GM12878 (cell line): ENCODE measurements at regions of chr17 and their contacts with region 1.

Region 1: DNA sequence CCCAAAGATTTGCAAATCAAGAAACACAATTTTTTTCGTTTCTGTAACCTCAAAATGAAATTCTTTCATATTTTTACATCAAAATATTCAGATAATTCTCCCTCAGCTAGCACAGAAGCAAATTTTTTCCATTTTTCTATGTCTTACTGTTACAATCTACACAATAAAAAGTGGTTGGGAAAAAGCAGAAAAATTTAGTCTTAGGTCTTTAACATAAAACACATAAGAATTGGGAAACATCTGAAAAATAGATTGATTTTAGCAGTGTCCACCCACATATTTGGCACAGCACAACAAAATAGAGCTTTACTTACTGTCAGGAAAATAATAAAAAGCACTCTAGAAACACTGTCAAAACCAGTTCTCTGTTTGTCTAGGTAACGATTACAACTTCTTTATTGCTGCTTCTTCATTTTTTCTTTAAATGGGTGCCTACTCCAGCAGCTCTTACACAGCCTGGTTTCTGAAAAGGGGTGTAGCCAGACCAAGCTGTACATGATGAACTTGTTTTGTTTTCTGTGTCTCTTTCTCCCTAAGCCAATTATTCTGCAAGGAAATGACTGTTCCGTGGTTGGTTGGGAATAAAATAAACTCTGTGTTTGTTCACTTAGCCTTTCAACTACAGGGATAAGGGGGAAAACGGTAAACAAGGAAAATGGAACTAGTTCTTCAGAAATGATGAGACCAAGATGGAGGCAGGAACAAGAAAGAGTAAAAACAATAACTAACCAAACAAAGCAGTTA is at the start of gene ABCA6:
- DNase-seq: no peak
- ATAC-seq: no peak
- H3K4me3 ChIP-seq: no peak within 1 kb of the TSS
- H3K27ac ChIP-seq: no peak within 1 kb of the TSS
- H3K4me1 ChIP-seq: no peaks in the 10 kb centered on the region
- H3K27me3 ChIP-seq: no peaks in the 10 kb centered on the region
- CTCF ChIP-seq: no peak
- EP300 ChIP-seq: no peak
- POLR2A ChIP-seq: no peak
- RAD21 ChIP-seq: no peak
- polyA plus RNA-seq, gene ABCA6: 9.0 to 10.1 TPM

Region 2: DNA sequence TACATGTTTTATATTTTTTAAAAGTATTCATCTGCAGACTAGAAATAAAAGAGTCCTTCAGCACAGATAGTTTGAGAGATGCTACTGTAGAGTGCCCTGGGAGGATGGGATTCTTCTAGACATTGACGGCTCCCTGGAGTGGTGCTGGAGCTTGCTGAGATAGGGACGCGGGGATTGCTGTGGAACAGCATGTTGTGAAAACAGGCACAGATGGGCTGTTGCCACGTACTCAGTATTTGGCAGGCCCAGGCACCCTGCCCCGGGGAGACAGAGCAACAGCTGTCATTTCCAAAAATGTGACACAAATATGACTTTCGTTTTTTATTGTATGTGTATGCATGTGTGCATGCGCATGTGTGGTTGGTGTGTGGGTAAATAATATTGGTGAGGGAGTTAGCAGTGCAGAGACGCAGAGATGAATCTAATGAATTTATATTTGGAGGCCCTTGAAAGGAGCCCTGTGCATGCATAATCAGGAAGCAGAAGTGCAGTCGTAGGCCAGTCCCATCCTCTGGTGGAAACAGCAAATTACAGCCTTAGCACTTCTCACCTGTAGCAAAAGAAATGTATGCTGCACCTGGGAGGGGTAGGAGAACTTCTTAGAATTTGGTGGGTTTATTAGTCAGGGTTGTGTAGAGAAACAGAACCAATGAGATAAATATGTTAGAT is 180.3 kb before region 1 on chr17:
- CTCF ChIA-PET with region 1: no interaction called
- POLR2A ChIA-PET with region 1: no interaction called
- RAD21 ChIA-PET with region 1: no interaction called
- SMC1A ChIA-PET with region 1: no interaction called
- in situ Hi-C with region 1: no loop called
- intact Hi-C with region 1: no loop called
- DNase-seq: no peak
- ATAC-seq: no peak
- H3K4me3 ChIP-seq: no peak overlapping the region
- H3K27ac ChIP-seq: no peak overlapping the region
- H3K4me1 ChIP-seq: no peaks in the 10 kb centered on the region
- H3K27me3 ChIP-seq: no peaks in the 10 kb centered on the region
- CTCF ChIP-seq: no peak
- EP300 ChIP-seq: no peak
- POLR2A ChIP-seq: no peak
- RAD21 ChIP-seq: no peak

Region 3: GRCh38 chr17:69130627-69131296 is 10.8 kb before region 1 on chr17:
- CTCF ChIA-PET with region 1: interaction called, 4 read pairs
- POLR2A ChIA-PET with region 1: no interaction called
- RAD21 ChIA-PET with region 1: interaction called, 3 read pairs
- SMC1A ChIA-PET with region 1: interaction called, 18 read pairs
- in situ Hi-C with region 1: no loop called
- intact Hi-C with region 1: no loop called
- DNase-seq: no peak
- ATAC-seq: no peak
- H3K4me3 ChIP-seq: no peak overlapping the region
- H3K27ac ChIP-seq: no peak overlapping the region
- H3K4me1 ChIP-seq: no peaks in the 10 kb centered on the region
- H3K27me3 ChIP-seq: no peaks in the 10 kb centered on the region
- CTCF ChIP-seq: no peak
- EP300 ChIP-seq: no peak
- POLR2A ChIP-seq: no peak
- RAD21 ChIP-seq: no peak